ENCODE measurements at regions of chr16 and their contacts with region 1.

Region 1: GRCh38 chr16:89895482-89896250 is 22.3 kb downstream of the TCF25 start:
- DNase-seq: no peak
- ATAC-seq: no peak
- H3K4me3 ChIP-seq: no peak overlapping the region
- H3K27ac ChIP-seq: no peak overlapping the region
- H3K4me1 ChIP-seq: no peaks in the 10 kb centered on the region
- H3K27me3 ChIP-seq: no peaks in the 10 kb centered on the region
- CTCF ChIP-seq: no peak

Region 2: GRCh38 chr16:89880477-89881367 is 14.9 kb before region 1 on chr16:
- intact Hi-C with region 1: loop called in 1 of 2 experiments (anchors 1 kb)
- DNase-seq: no peak
- ATAC-seq: no peak
- H3K4me3 ChIP-seq: no peak overlapping the region
- H3K27ac ChIP-seq: no peak overlapping the region
- H3K4me1 ChIP-seq: no peaks in the 10 kb centered on the region
- H3K27me3 ChIP-seq: no peaks in the 10 kb centered on the region
- CTCF ChIP-seq: no peak

Region 3: DNA sequence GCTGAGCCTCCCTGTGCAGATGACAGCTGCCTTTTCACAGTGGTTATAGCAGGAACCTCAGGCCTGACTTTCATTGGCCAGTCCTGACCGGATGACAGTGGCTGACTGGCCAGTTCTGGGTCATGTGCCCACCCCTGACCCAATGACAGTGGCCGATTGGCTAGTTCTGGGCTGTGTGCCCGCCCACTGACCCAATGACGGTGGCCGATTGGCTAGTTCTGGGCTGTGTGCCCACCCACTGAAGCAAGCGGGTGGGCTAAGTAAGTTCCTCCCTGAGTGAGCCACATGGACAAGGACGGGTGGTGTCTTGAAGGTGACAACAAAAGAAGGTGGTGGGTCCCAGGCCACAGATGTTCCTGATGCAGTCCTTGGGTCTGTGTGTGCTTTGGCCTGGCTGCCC is 62.4 kb after region 1 on chr16:
- intact Hi-C with region 1: no loop called
- DNase-seq: peak in 1 of 2 donors; percentile 70
- ATAC-seq: peak; percentile 47 to 80 (median 62)
- H3K4me3 ChIP-seq: no peak overlapping the region
- H3K27ac ChIP-seq: no peak overlapping the region
- H3K4me1 ChIP-seq: no peaks in the 10 kb centered on the region
- H3K27me3 ChIP-seq: no peaks in the 10 kb centered on the region
- CTCF ChIP-seq: no peak